ENCODE measurements at regions of chr16 and their contacts with region 1.

Region 1: GRCh38 chr16:27867122-27868110 is 196.1 kb downstream of the GSG1L start:
- DNase-seq: peak; percentile 70 to 99
- H3K4me3 ChIP-seq: no peak overlapping the region
- H3K27ac ChIP-seq: no peak overlapping the region
- H3K4me1 ChIP-seq: no peaks in the 10 kb centered on the region
- H3K27me3 ChIP-seq: peaks cover 0 to 3% (median 1%) of the 10 kb centered on the region in 4 experiments; a peak in 2 of 7 replicates
- CTCF ChIP-seq: peak; percentile 79 to 87 (median 81)
- EP300 ChIP-seq: no peak
- POLR2A ChIP-seq: no peak
- RAD21 ChIP-seq: peak; percentile 83

Region 2: DNA sequence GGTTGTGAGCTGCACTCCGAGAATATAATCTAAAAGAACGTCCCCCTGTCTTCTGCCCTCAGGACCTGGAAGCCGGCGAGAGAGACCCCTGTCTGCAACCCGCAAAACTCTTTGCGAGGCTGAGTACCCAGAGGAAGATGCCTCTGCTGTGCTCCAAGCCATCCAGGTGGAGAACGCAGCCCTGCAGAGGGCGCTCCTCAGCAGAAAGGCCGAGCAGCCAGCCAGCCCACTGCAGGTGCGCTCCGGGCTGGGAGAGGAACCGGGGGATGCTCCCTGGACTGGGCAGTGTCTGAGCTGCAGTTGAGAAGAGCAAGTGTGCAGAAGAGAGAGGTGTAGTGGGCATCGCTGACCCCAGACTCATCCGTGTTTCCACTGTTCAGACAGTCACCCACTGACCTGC is 169.2 kb before region 1 on chr16:
- CTCF ChIA-PET with region 1: interaction called, 28 read pairs
- POLR2A ChIA-PET with region 1: no interaction called
- DNase-seq: peak; percentile 70 to 95
- H3K4me3 ChIP-seq: no peak overlapping the region
- H3K27ac ChIP-seq: no peak overlapping the region
- H3K4me1 ChIP-seq: peaks cover 0 to 11% (median 2%) of the 10 kb centered on the region in 4 experiments; a peak in 4 of 7 replicates
- H3K27me3 ChIP-seq: no peaks in the 10 kb centered on the region
- CTCF ChIP-seq: peak; percentile 97 to 98 (median 97)
- EP300 ChIP-seq: no peak
- POLR2A ChIP-seq: no peak
- RAD21 ChIP-seq: peak; percentile 68 to 81

Region 3: GRCh38 chr16:27779641-27780164 is 87.7 kb before region 1 on chr16:
- CTCF ChIA-PET with region 1: interaction called, 158 read pairs
- POLR2A ChIA-PET with region 1: no interaction called
- DNase-seq: peak; percentile 41 to 88
- H3K4me3 ChIP-seq: no peak overlapping the region
- H3K27ac ChIP-seq: no peak overlapping the region
- H3K4me1 ChIP-seq: 0 out of 7 replicates have a peak, but pooled peaks cover 0 to 5% (median under 1%) of the 10 kb centered on the region in 4 experiments
- H3K27me3 ChIP-seq: no peaks in the 10 kb centered on the region
- CTCF ChIP-seq: peak; percentile 70 to 88 (median 81)
- EP300 ChIP-seq: no peak
- POLR2A ChIP-seq: no peak
- RAD21 ChIP-seq: peak; percentile 76 to 84

Region 4: GRCh38 chr16:27840311-27841060 is 26.9 kb before region 1 on chr16:
- CTCF ChIA-PET with region 1: interaction called, 17 read pairs
- POLR2A ChIA-PET with region 1: no interaction called
- DNase-seq: no peak
- H3K4me3 ChIP-seq: no peak overlapping the region
- H3K27ac ChIP-seq: no peak overlapping the region; the same call in 1 of the 2 replicates
- H3K4me1 ChIP-seq: peaks cover 0 to 3% (median 1%) of the 10 kb centered on the region in 4 experiments; a peak in 2 of 7 replicates
- H3K27me3 ChIP-seq: no peaks in the 10 kb centered on the region
- CTCF ChIP-seq: no peak
- EP300 ChIP-seq: no peak
- POLR2A ChIP-seq: no peak
- RAD21 ChIP-seq: no peak

Region 5: GRCh38 chr16:27879601-27880247 is 12.3 kb after region 1 on chr16:
- CTCF ChIA-PET with region 1: interaction called, 10 read pairs
- POLR2A ChIA-PET with region 1: no interaction called
- DNase-seq: no peak
- H3K4me3 ChIP-seq: no peak overlapping the region
- H3K27ac ChIP-seq: no peak overlapping the region
- H3K4me1 ChIP-seq: no peaks in the 10 kb centered on the region
- H3K27me3 ChIP-seq: no peaks in the 10 kb centered on the region
- CTCF ChIP-seq: no peak
- EP300 ChIP-seq: no peak
- POLR2A ChIP-seq: no peak
- RAD21 ChIP-seq: no peak

Measured in H1 (cell line).